CD4-positive, alpha-beta T cell (primary cell): ENCODE measurements at regions of chr10 and their contacts with region 1.

Region 1: DNA sequence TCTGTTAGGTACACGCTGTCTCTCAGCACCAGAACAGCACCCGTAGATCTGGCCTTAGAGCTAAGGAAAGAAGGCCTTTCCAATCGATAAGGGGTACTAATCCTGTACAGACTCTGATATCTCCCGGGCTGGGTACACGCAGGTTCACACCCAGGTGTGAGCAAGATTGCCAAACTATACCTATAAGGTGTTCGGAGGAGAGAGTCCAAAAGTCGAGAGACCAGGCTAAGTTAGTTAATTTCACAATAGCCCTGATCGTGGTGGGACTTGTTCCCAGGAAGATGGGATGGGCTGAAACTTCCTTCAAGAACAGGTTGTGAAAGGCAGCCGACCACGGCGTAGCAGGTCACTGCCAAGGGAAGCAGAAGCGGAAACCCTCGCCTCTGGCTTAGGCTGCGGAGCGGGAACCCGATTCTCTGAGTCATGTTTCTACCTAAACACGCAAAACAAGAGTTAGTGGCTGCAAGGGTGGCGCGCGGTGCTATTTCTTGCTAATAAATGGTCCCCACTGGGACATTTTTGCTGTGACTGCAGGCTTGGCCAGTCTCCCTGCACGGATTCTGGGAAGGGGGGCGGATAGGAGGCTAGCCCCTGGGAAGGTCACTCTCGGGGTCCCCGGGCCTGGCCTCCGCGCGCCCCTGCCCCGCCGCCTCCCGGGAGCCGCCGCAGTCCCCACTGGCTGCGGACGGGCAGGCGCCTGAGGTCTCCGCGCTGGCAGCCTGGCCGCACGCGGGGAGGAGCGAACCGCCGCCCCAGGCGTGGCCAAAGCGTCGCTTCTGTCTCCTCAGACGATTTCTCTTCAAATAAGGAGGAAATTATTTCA is 75.4 kb upstream of the PDSS1 start:
- DNase-seq: peak in 7 of 14 experiments; percentile 5 to 61 (median 19)
- ATAC-seq: peak; percentile 68
- H3K4me3 ChIP-seq: peak overlapping the region; percentile 49
- H3K4me3 Mint-ChIP-seq: peak overlapping the region; percentile 76
- H3K27ac ChIP-seq: no peak overlapping the region
- H3K27ac Mint-ChIP-seq: peak overlapping the region; percentile 13
- H3K4me1 ChIP-seq: peaks cover 13% of the 10 kb centered on the region
- H3K4me1 Mint-ChIP-seq: peaks cover 13% of the 10 kb centered on the region
- H3K27me3 ChIP-seq: peaks cover 4 to 14% of the 10 kb centered on the region in 2 experiments
- H3K27me3 Mint-ChIP-seq: peaks cover 19% of the 10 kb centered on the region
- CTCF ChIP-seq: no peak

Region 2: DNA sequence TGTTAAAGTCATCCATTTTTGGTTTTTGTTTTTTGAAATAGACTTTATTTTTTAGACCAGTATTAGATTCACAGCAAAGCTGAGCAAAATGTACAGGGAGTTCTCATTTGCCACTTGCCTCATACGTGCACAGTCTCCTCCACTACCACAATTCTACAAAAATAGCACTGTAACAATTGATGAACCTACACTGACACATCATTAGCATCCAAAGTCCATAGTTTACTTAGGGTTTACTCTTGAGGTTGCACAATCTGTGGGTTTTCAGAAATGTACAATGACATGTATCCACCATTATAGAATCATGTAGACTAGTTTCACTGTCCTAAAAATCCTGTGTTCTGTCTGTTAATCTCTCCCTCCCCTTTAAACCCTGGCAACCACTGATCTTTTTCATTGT is 50.4 kb before region 1 on chr10:
- CTCF ChIA-PET with region 1: no interaction called
- POLR2A ChIA-PET with region 1: no interaction called
- intact Hi-C with region 1: loop called in 1 of 2 experiments (anchors 2 kb)
- DNase-seq: no peak
- ATAC-seq: no peak
- H3K4me3 ChIP-seq: no peak overlapping the region
- H3K4me3 Mint-ChIP-seq: no peak overlapping the region
- H3K27ac ChIP-seq: no peak overlapping the region
- H3K27ac Mint-ChIP-seq: no peak overlapping the region
- H3K4me1 ChIP-seq: no peaks in the 10 kb centered on the region
- H3K4me1 Mint-ChIP-seq: no peaks in the 10 kb centered on the region
- H3K27me3 ChIP-seq: no peaks in the 10 kb centered on the region
- H3K27me3 Mint-ChIP-seq: no peaks in the 10 kb centered on the region
- CTCF ChIP-seq: no peak

Region 3: GRCh38 chr10:26690731-26691475 is 68.8 kb after region 1 on chr10:
- CTCF ChIA-PET with region 1: no interaction called
- POLR2A ChIA-PET with region 1: no interaction called
- intact Hi-C with region 1: no loop called
- DNase-seq: peak in 2 of 14 experiments; percentile 20 to 34
- ATAC-seq: no peak
- H3K4me3 ChIP-seq: no peak overlapping the region
- H3K4me3 Mint-ChIP-seq: no peak overlapping the region
- H3K27ac ChIP-seq: no peak overlapping the region
- H3K27ac Mint-ChIP-seq: no peak overlapping the region
- H3K4me1 ChIP-seq: peaks cover 9% of the 10 kb centered on the region
- H3K4me1 Mint-ChIP-seq: peaks cover 24% of the 10 kb centered on the region
- H3K27me3 ChIP-seq: no peaks in the 10 kb centered on the region
- H3K27me3 Mint-ChIP-seq: no peaks in the 10 kb centered on the region
- CTCF ChIP-seq: no peak

Region 4: DNA sequence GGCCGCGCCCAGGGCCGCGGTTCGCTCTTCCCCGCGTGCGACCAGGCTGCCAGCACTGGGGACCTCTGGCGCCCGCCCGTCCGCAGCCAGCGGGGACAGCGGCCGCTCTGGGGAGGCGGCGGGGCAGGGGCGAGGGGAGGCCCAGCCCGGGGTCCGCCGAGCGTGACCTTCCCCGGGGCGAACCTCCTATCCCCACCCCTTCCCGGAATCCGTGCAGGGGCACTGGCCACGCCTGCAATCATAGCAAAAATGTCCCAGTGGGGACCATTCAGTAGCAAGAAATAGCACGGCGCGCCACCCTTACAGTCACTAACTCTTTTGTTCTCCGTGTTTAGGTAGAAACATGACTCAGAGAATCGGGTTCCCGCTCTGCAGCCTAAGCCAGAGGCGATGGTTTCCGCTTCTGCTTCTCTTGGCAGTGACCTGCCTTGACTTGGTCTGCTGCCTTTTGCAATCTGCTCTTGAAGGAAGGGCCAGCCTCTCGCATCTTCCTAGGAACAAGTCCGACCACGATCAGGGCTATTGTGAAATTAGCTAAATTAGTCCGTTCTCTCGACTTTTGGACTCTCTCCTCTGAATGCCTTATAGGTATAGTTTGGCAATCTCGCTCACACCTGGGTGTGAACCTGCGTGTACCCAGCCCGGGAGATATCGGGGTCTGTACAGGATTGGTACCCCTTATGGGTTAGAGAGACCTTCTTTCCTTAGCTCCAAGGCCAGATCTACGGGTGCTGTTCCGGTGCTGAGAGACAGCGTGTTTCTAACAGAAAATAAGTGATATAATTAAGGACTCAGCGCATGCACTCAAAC is 697.9 kb after region 1 on chr10:
- CTCF ChIA-PET with region 1: no interaction called
- POLR2A ChIA-PET with region 1: no interaction called
- intact Hi-C with region 1: loop called in 1 of 2 experiments (anchors 10 kb)
- DNase-seq: peak in 8 of 14 experiments; percentile 3 to 63 (median 20)
- ATAC-seq: no peak
- H3K4me3 ChIP-seq: no peak overlapping the region
- H3K4me3 Mint-ChIP-seq: peak overlapping the region; percentile 28
- H3K27ac ChIP-seq: no peak overlapping the region
- H3K27ac Mint-ChIP-seq: no peak overlapping the region
- H3K4me1 ChIP-seq: peaks cover 2% of the 10 kb centered on the region
- H3K4me1 Mint-ChIP-seq: peaks cover 3% of the 10 kb centered on the region
- H3K27me3 ChIP-seq: peaks cover 6 to 7% of the 10 kb centered on the region in 2 experiments
- H3K27me3 Mint-ChIP-seq: peaks cover 35% of the 10 kb centered on the region
- CTCF ChIP-seq: no peak